MCF 10A (cell line): ENCODE measurements at regions of chr18 and their contacts with region 1.

Region 1: DNA sequence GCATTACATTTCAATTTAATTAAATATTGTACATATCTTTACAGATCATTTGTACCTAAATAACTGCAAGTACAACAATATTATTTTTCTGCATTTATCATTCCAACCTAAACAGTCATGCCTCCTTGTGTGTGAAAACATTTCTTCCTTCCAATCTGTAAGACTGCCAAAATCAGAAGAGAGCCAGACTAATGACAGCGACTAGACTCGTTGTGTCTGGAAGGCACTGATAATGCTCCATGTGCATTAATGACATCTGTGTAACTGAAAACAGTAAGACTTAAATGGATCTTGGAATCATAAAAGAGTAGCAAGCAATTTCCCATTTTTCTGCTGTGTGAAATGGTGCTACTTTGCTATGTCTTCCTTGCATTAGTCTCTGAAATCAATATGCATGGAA is 278.0 kb upstream of the DSEL start:
- DNase-seq: no peak
- H3K4me3 Mint-ChIP-seq: no peak overlapping the region
- H3K27ac Mint-ChIP-seq: no peak overlapping the region
- H3K4me1 Mint-ChIP-seq: peaks cover 5% of the 10 kb centered on the region
- H3K27me3 Mint-ChIP-seq: no peaks in the 10 kb centered on the region
- CTCF ChIP-seq: no peak

Region 2: DNA sequence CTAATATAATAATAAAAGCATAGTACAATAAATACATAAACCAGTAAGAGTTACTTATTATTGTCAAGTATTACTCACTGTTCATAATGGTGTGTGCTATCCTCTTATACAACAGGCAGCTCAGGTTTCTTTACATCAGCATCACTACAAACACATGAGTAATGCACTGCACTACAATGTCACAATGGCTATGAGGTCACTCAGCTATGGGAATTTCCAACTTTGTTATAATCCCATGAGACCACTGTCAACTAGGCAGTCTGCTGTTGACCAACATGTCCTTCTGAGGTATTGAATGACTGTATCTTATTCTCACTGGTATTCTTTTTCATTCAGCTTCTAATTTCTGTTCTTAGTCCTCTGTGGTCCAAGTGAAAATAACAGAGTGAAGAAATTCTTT is 27.6 kb before region 1 on chr18:
- CTCF ChIA-PET with region 1: no interaction called
- POLR2A ChIA-PET with region 1: no interaction called
- intact Hi-C with region 1: loop called (anchors 1 kb)
- DNase-seq: peak; percentile 87
- H3K4me3 Mint-ChIP-seq: no peak overlapping the region
- H3K27ac Mint-ChIP-seq: peak overlapping the region; percentile 84
- H3K4me1 Mint-ChIP-seq: peaks cover 11% of the 10 kb centered on the region
- H3K27me3 Mint-ChIP-seq: no peaks in the 10 kb centered on the region
- CTCF ChIP-seq: no peak

Region 3: GRCh38 chr18:67805261-67805660 is 10.7 kb after region 1 on chr18:
- CTCF ChIA-PET with region 1: no interaction called
- POLR2A ChIA-PET with region 1: no interaction called
- intact Hi-C with region 1: no loop called
- DNase-seq: no peak
- H3K4me3 Mint-ChIP-seq: no peak overlapping the region
- H3K27ac Mint-ChIP-seq: no peak overlapping the region
- H3K4me1 Mint-ChIP-seq: peaks cover 4% of the 10 kb centered on the region
- H3K27me3 Mint-ChIP-seq: no peaks in the 10 kb centered on the region
- CTCF ChIP-seq: no peak